HEK293T (cell line): ENCODE measurements at regions of chr19 and their contacts with region 1.

Region 1: GRCh38 chr19:37217855-37218591 is at the start of gene ZNF383:
- DNase-seq: peak; percentile 82

Region 2: GRCh38 chr19:37077934-37078725 is 139.9 kb before region 1 on chr19 and contains the start of gene ZNF420:
- CTCF ChIA-PET with region 1: no interaction called
- POLR2A ChIA-PET with region 1: interaction called, 10 read pairs
- DNase-seq: peak; percentile 83